H1 (cell line): ENCODE measurements at regions of chr3 and their contacts with region 1.

Region 1: GRCh38 chr3:43855674-43856299 is 165.0 kb downstream of the ABHD5 start:
- DNase-seq: peak in 1 of 2 experiments; percentile 84
- H3K4me3 ChIP-seq: no peak overlapping the region
- H3K27ac ChIP-seq: no peak overlapping the region
- H3K4me1 ChIP-seq: peaks cover 6 to 10% (median 9%) of the 10 kb centered on the region in 4 experiments
- H3K27me3 ChIP-seq: peaks cover 0 to 3% (median under 1%) of the 10 kb centered on the region in 4 experiments; a peak in 2 of 7 replicates
- CTCF ChIP-seq: peak; percentile 77 to 89 (median 86)
- EP300 ChIP-seq: no peak
- POLR2A ChIP-seq: no peak
- RAD21 ChIP-seq: peak; percentile 75 to 83

Region 2: DNA sequence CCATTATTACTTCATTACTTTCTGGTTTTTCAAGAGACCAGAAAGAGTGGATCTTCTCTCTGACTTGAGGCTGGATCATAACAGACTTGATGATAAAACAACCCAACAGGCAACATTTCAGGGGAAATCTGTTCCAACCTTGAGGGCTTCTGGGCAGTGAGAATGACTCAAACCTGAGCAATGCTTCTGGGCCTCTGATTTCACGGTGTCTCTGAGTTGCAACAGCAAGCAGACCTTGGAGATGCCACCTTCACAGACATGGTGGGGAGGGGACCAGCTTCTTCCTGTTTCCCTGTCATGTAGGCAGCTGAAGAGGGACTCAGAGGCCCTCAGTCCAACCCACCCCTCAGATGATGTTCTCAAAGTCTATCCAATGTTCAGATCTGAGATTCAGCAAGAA is 61.0 kb before region 1 on chr3:
- CTCF ChIA-PET with region 1: interaction called, 16 read pairs
- POLR2A ChIA-PET with region 1: no interaction called
- DNase-seq: no peak
- H3K4me3 ChIP-seq: no peak overlapping the region
- H3K27ac ChIP-seq: no peak overlapping the region
- H3K4me1 ChIP-seq: no peaks in the 10 kb centered on the region
- H3K27me3 ChIP-seq: peaks cover 0 to 2% (median 0%) of the 10 kb centered on the region in 4 experiments; a peak in 1 of 7 replicates
- CTCF ChIP-seq: no peak
- EP300 ChIP-seq: no peak
- POLR2A ChIP-seq: no peak
- RAD21 ChIP-seq: no peak

Region 3: GRCh38 chr3:43870120-43870519 is 14.3 kb after region 1 on chr3:
- CTCF ChIA-PET with region 1: interaction called, 88 read pairs
- POLR2A ChIA-PET with region 1: interaction called, 4 read pairs
- DNase-seq: no peak
- H3K4me3 ChIP-seq: no peak overlapping the region
- H3K27ac ChIP-seq: no peak overlapping the region
- H3K4me1 ChIP-seq: peaks cover 0 to 6% (median 1%) of the 10 kb centered on the region in 4 experiments; a peak in 4 of 7 replicates
- H3K27me3 ChIP-seq: no peaks in the 10 kb centered on the region
- CTCF ChIP-seq: no peak
- EP300 ChIP-seq: no peak
- POLR2A ChIP-seq: no peak
- RAD21 ChIP-seq: no peak

Region 4: DNA sequence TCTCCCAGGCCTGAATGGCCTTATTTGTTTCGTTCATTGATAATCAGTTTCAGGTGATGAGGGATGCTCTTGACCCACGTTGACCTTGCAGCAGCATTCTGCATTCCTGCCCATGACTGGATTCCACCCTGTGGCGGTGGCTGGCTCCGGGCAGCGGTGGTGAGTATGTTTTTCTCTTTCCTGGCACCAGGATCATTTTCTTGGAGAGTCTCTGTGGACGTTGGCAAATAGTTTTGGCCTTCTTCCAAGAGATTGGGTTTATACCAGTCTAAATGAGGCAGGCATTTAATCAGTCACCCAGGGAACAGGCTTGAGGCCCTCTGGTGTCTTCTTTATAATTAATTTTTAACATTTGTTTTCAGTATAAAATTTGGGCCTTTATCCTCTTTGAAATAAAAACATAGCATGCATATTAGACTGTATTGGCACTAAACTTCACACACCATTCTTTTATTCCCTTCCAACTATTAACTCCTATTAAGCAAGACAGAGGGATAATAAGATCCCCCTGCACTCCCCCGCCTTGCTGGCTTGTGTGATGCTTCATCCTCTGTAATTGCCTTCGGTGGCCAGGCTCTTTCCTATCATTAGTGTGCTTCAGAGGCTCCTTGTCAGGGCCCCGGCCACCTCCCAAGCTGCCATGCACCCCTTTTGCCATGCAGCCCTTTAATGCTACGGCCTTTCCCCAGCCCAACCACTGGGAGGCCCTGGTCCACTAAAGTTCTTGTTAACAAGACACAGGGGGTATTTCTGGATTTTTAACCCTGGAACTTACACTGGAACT is 209.7 kb after region 1 on chr3:
- CTCF ChIA-PET with region 1: interaction called, 15 read pairs
- POLR2A ChIA-PET with region 1: no interaction called
- DNase-seq: no peak
- H3K4me3 ChIP-seq: no peak overlapping the region
- H3K27ac ChIP-seq: no peak overlapping the region
- H3K4me1 ChIP-seq: peaks cover 4 to 15% (median 10%) of the 10 kb centered on the region in 4 experiments
- H3K27me3 ChIP-seq: no peaks in the 10 kb centered on the region
- CTCF ChIP-seq: peak; percentile 46 to 57 (median 53)
- EP300 ChIP-seq: no peak
- POLR2A ChIP-seq: no peak
- RAD21 ChIP-seq: peak; percentile 56 to 71

Region 5: GRCh38 chr3:44264146-44264545 is 408.4 kb after region 1 on chr3:
- CTCF ChIA-PET with region 1: no interaction called
- POLR2A ChIA-PET with region 1: no interaction called
- DNase-seq: no peak
- H3K4me3 ChIP-seq: no peak overlapping the region
- H3K27ac ChIP-seq: no peak overlapping the region
- H3K4me1 ChIP-seq: no peaks in the 10 kb centered on the region
- H3K27me3 ChIP-seq: no peaks in the 10 kb centered on the region
- CTCF ChIP-seq: no peak
- EP300 ChIP-seq: no peak
- POLR2A ChIP-seq: no peak
- RAD21 ChIP-seq: no peak